ENCODE measurements at regions of chr2 and their contacts with region 1.

Region 1: DNA sequence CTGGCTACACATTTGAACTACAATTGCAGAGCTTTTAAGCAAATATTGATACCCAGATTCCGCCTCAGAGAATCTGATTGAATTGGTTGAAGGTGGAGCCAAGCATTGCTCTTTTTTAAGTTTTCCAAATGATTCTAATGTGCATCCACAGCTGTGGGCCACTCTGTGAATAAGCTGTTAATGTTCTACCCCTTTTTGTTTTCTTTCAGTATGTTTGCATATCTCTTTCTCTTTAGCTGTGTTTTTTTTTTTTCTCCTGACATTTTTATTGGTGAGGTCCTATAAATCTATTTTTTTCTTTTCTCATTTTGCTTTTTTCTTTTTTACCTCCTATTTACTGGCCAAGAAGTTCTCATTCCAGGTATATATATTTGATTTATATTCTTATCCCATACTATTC is 6.5 kb downstream of the SCN3A start:
- DNase-seq: no peak
- ATAC-seq: no peak
- H3K4me3 ChIP-seq: no peak overlapping the region
- H3K27ac ChIP-seq: no peak overlapping the region
- H3K4me1 ChIP-seq: no peaks in the 10 kb centered on the region
- H3K27me3 ChIP-seq: no peaks in the 10 kb centered on the region

Region 2: DNA sequence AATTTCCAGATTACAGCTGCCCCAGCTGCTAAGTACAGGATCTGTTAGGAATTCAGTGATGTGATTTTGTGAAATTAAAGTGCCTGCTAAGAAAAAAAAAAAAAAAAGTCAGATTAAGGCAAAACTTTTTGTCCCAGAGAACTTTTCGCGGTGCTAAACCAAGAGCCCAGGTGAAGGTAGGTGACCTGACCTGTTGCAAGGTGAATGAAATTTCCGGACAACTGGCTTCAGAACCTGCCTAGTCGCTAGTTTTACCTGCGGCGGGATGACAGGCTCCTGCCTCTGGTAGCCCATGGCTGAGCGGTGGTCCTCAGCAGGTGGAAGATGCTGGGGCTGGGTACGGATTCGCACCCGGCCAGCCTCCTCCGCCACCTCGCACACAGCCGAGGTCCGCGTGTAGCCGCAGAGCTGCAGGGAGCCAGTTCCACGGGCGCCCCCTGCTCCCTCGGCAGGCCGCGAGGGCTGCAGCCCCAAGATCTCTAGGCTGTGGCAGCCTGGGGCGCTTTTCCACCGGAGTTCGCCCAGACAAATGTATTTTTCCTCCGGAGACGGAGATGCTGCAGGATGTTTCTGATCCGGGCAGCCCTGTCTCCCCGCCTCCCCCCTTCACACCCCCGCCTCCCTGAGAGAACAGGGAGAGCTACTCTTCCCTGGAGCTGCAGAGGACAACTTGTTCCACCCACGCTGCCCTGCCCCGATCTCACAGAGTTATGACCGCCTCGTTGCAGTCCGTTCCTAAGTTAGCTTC is 242.2 kb before region 1 on chr2 and contains the start of gene SLC38A11:
- intact Hi-C with region 1: no loop called
- DNase-seq: peak in 1 of 2 donors; percentile 79
- ATAC-seq: peak; percentile 71
- H3K4me3 ChIP-seq: peak within 1 kb of the TSS in 1 of 2 donors; percentile 59
- H3K27ac ChIP-seq: no peak within 1 kb of the TSS
- H3K4me1 ChIP-seq: no peaks in the 10 kb centered on the region
- H3K27me3 ChIP-seq: no peaks in the 10 kb centered on the region
- total RNA-seq, gene SLC38A11: 1.1 to 1.4 TPM

Region 3: DNA sequence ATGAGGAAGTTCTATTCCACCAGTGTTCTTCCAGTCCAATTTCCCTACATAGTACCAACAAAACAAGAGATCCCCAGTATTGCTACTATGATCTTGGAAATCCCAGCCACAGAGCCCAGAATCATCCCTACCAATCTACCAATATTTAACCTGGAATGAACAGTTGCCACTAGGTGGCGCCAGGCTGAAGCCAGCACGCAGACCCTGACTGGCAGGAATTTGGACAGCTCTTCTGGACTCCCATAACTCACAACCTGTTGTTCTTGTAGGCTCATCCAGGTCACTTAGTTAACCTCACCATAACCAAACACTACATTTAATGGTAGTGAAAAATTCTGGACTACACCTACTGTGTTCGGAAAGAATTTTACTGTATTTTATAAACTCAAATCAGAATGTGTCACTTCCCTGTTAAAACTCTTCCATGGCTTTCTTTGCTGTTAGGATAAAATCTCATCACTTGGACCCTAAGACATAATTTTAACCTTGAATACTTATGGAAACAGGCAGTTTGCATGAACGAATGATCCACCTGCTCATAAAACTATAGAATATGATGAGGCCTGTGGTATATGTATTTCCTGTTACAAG is 182.2 kb before region 1 on chr2:
- intact Hi-C with region 1: loop called (anchors 5 kb)
- DNase-seq: peak; percentile 59 to 85
- ATAC-seq: peak; percentile 61
- H3K4me3 ChIP-seq: no peak overlapping the region
- H3K27ac ChIP-seq: no peak overlapping the region
- H3K4me1 ChIP-seq: no peaks in the 10 kb centered on the region
- H3K27me3 ChIP-seq: no peaks in the 10 kb centered on the region

Region 4: DNA sequence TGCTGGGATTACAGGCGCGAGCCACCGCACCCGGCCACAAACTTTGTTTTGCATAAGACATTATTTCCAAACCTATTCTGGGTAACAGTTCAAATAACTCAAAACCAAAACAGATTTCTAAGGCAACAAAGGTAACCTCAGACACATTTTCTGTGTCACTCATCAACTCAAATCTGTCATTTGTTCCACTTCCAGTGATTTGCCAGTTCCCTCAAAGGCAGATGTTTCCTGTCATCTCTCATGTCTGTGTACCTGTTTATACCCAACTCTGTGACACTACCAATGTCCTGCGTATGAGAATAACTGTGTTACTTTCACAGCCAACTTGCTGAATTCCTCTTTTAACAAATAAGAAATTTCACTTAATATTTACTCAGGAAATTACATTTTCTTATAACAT is 47.9 kb before region 1 on chr2:
- intact Hi-C with region 1: no loop called
- DNase-seq: no peak
- ATAC-seq: no peak
- H3K4me3 ChIP-seq: no peak overlapping the region
- H3K27ac ChIP-seq: no peak overlapping the region
- H3K4me1 ChIP-seq: no peaks in the 10 kb centered on the region
- H3K27me3 ChIP-seq: no peaks in the 10 kb centered on the region